ENCODE measurements at regions of chr10 and their contacts with region 1.

Region 1: GRCh38 chr10:70880077-70880534 is 8.3 kb downstream of the PCBD1 start:
- DNase-seq: no peak
- H3K4me3 ChIP-seq: no peak overlapping the region
- CTCF ChIP-seq: peak; percentile 83

Region 2: GRCh38 chr10:70808887-70809611 is 71.1 kb before region 1 on chr10:
- CTCF ChIA-PET with region 1: interaction called, 81 read pairs
- POLR2A ChIA-PET with region 1: no interaction called
- DNase-seq: no peak
- H3K4me3 ChIP-seq: no peak overlapping the region
- CTCF ChIP-seq: no peak

Region 3: GRCh38 chr10:70815504-70816219 is 64.4 kb before region 1 on chr10 and contains the start of gene SGPL1:
- CTCF ChIA-PET with region 1: interaction called, 81 read pairs
- POLR2A ChIA-PET with region 1: interaction called, 3 read pairs
- DNase-seq: no peak
- H3K4me3 ChIP-seq: peak within 1 kb of the TSS; percentile 91
- CTCF ChIP-seq: peak; percentile 89

Region 4: GRCh38 chr10:70853038-70853437 is 27.1 kb before region 1 on chr10:
- CTCF ChIA-PET with region 1: interaction called, 14 read pairs
- POLR2A ChIA-PET with region 1: no interaction called
- DNase-seq: no peak
- H3K4me3 ChIP-seq: no peak overlapping the region
- CTCF ChIP-seq: no peak

Region 5: DNA sequence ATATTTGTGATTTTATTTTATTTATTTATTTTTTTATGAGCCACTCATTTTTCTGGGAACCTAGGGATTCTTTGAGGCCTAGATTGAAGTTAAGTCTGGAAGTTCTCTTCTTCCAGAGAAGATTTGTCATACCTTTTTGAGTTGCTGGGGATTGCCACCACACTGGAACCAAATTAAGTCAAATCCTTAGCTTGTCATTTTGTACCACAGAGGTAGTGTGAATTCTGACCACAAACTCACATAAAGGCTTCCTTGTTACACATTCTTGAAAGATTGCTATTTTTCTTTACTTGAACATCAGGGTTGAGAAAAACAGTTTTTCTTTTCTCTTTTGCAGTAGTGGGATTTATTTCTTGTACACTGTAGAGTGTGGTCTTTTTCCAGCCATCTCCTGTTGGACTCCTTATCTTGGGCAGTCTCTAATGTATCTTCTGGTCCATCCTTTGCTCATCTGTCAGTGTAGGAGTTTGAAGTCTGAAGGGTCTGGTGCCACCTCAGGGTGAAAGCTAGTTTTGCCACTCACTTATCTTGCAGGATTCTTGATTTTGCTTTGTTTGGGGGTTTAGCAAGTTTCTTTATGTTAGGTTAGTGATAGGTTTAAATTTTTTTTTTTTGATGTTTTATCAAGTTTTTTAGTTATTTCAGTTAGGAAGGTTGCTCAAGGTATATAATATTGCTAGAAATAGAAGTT is 16.5 kb before region 1 on chr10:
- CTCF ChIA-PET with region 1: interaction called, 27 read pairs
- POLR2A ChIA-PET with region 1: no interaction called
- DNase-seq: no peak
- H3K4me3 ChIP-seq: no peak overlapping the region
- CTCF ChIP-seq: no peak

Measured in AG04449 (cell line).